Breast epithelium (tissue), 4 donors: ENCODE measurements at regions of chr2 and their contacts with region 1.

Region 1: DNA sequence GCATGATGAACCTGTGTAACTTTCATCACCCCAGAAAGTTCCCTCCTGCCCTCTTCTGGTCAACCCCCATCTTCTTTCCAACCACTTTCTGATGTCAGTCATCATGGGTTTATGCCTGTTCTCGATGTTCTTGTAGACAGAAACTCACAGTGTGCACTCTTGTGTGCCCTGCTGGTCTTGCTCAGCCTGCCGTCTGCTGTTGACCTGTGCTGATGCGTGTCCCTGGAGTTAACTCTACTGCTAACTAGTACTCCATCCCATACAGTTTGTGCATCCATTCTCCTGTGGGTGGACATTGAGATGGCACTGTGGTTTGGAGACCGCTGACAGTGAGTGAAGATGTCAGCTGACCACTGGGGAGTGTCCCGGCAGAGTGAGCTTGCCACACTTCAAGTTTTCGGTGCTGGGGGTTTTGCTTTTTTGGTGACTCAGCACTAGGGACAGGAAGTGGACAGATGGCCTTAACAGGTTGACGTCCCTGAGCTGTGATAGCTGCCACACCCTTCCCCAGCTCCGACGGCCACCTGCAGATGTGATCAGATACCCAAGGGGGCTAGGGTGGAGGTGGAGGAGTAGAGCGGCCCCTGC is 14.8 kb downstream of the KLHL29 start:
- DNase-seq: no peak
- H3K4me3 ChIP-seq: no peak overlapping the region
- H3K27ac ChIP-seq: no peak overlapping the region
- H3K4me1 ChIP-seq: no peaks in the 10 kb centered on the region
- H3K27me3 ChIP-seq: no peaks in the 10 kb centered on the region
- CTCF ChIP-seq: no peak
- POLR2A ChIP-seq: no peak

Region 2: DNA sequence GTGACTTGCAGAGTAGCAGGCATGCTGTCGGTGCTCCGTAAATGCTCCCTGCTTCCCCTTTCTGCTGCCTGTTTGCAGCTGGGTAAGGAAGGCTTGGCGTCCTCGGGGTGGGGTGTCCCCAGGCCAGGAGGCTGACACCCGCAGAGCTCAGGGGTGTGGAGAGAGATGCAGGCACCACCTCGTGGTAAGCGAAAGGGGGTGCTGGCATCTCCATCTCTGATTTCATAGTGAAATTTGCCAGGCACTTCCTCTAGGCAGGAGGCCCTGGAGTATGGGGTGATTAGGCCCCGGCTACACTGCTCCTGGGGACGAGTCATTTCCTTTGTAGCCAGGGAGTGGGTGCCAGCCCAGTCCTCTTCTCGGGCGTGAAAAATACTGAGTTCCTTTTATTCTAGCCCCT is 145.6 kb after region 1 on chr2:
- intact Hi-C with region 1: no loop called
- DNase-seq: no peak
- H3K4me3 ChIP-seq: no peak overlapping the region
- H3K27ac ChIP-seq: peak overlapping the region in 1 of 2 donors; percentile 38
- H3K4me1 ChIP-seq: no peaks in the 10 kb centered on the region
- H3K27me3 ChIP-seq: peaks cover 0 to 3% of the 10 kb centered on the region in 2 donors
- CTCF ChIP-seq: no peak
- POLR2A ChIP-seq: no peak

Region 3: GRCh38 chr2:25265802-25266201 is 1866.0 kb after region 1 on chr2:
- intact Hi-C with region 1: loop called (anchors 10 kb)
- DNase-seq: no peak
- H3K4me3 ChIP-seq: no peak overlapping the region
- H3K27ac ChIP-seq: no peak overlapping the region
- H3K4me1 ChIP-seq: no peaks in the 10 kb centered on the region
- H3K27me3 ChIP-seq: no peaks in the 10 kb centered on the region
- CTCF ChIP-seq: no peak
- POLR2A ChIP-seq: no peak